PC-9 (cell line): ENCODE measurements at regions of chr5 and their contacts with region 1.

Region 1: DNA sequence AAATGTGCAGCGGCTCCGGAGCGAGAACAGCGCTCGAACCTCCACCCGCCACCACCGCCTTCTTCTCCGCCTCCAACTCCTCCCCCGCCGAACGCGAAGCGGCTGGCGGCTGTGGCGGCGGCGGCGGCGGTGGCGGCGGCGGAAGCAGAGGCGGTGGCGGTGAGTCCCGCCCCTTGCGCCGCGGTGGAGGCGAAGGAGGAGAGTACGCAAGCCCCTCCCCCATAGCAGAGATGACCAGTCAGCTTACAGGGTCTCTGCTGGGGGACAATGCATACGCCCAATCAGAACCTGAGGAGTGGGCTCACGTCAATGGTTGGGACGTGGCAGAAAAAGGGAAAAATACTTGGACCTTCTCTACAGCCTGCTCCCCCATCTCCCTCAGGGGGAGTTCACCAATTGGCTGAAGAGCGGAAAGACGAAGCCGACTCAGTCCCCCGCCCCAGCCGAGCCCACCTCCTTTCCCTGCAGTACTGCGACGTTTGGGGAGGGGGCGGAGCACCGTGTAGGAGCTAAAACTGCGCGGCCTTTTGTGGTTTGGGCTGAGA is at the start of gene PJA2:
- DNase-seq: peak; percentile 97 to 98
- H3K4me3 ChIP-seq: peak within 1 kb of the TSS; percentile 63
- H3K27ac ChIP-seq: peak within 1 kb of the TSS; percentile 81
- H3K4me1 ChIP-seq: peaks cover 34% of the 10 kb centered on the region
- H3K27me3 ChIP-seq: no peaks in the 10 kb centered on the region
- CTCF ChIP-seq: no peak
- total RNA-seq, gene PJA2: 23.0 and 29.9 TPM in 2 replicates

Region 2: GRCh38 chr5:108727651-108728565 is 682.0 kb before region 1 on chr5:
- CTCF ChIA-PET with region 1: no interaction called
- POLR2A ChIA-PET with region 1: interaction called, 4 read pairs
- intact Hi-C with region 1: loop called (anchors 1 kb)
- DNase-seq: peak; percentile 80 to 93
- H3K4me3 ChIP-seq: peak overlapping the region; percentile 73
- H3K27ac ChIP-seq: peak overlapping the region; percentile 78
- H3K4me1 ChIP-seq: peaks cover 37% of the 10 kb centered on the region
- H3K27me3 ChIP-seq: no peaks in the 10 kb centered on the region
- CTCF ChIP-seq: no peak

Region 3: GRCh38 chr5:109619606-109620005 is 209.7 kb after region 1 on chr5:
- CTCF ChIA-PET with region 1: no interaction called
- POLR2A ChIA-PET with region 1: no interaction called
- intact Hi-C with region 1: no loop called
- DNase-seq: no peak
- H3K4me3 ChIP-seq: no peak overlapping the region
- H3K27ac ChIP-seq: no peak overlapping the region
- H3K4me1 ChIP-seq: no peaks in the 10 kb centered on the region
- H3K27me3 ChIP-seq: no peaks in the 10 kb centered on the region
- CTCF ChIP-seq: no peak